ENCODE measurements at regions of chr17 and their contacts with region 1.

Region 1: GRCh38 chr17:42112552-42113176 is at the start of gene DHX58:
- H3K4me3 Mint-ChIP-seq: peak within 1 kb of the TSS; percentile 73
- H3K27ac Mint-ChIP-seq: peak within 1 kb of the TSS; percentile 93
- H3K4me1 Mint-ChIP-seq: peaks cover 64% of the 10 kb centered on the region
- H3K27me3 Mint-ChIP-seq: no peaks in the 10 kb centered on the region

Region 2: DNA sequence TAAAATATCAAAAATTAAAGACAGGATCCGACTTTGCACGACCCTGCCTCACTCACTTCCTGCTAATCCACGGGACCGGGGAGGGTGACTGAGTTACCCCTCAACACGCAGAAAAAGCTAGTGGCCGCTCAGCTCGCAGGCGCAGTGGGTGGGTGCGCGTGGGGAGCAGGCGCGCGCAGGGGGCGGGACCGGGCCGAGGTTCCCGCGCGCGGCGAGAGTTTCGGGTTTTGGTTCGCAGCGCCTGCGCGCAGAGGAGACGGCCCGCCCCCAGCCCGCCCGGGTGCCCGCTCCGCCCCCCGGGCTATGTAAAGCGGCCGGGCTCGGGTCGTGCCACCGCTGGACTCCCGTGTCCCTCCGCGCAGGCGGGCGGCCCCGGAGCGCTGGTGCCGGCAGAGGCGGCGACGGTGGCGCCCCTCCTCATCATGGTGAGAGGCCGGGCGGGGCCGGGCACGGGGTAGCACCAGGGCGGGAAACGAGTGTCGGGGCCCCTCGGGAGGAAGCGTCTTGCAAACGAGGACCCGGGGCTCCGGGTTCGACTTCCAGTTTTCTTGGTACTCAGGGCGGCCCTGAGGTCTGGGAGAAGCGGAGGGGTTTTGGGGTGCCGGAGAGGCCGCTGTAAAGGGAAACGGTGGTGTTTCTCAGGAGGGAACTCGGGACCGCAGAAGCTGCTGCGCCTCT is 146.1 kb before region 1 on chr17 and contains the start of gene CNP:
- intact Hi-C with region 1: loop called (anchors 1 kb)
- H3K4me3 Mint-ChIP-seq: peak within 1 kb of the TSS; percentile 76
- H3K27ac Mint-ChIP-seq: peak within 1 kb of the TSS; percentile 36
- H3K4me1 Mint-ChIP-seq: peaks cover 47% of the 10 kb centered on the region
- H3K27me3 Mint-ChIP-seq: peaks cover 4% of the 10 kb centered on the region

Region 3: DNA sequence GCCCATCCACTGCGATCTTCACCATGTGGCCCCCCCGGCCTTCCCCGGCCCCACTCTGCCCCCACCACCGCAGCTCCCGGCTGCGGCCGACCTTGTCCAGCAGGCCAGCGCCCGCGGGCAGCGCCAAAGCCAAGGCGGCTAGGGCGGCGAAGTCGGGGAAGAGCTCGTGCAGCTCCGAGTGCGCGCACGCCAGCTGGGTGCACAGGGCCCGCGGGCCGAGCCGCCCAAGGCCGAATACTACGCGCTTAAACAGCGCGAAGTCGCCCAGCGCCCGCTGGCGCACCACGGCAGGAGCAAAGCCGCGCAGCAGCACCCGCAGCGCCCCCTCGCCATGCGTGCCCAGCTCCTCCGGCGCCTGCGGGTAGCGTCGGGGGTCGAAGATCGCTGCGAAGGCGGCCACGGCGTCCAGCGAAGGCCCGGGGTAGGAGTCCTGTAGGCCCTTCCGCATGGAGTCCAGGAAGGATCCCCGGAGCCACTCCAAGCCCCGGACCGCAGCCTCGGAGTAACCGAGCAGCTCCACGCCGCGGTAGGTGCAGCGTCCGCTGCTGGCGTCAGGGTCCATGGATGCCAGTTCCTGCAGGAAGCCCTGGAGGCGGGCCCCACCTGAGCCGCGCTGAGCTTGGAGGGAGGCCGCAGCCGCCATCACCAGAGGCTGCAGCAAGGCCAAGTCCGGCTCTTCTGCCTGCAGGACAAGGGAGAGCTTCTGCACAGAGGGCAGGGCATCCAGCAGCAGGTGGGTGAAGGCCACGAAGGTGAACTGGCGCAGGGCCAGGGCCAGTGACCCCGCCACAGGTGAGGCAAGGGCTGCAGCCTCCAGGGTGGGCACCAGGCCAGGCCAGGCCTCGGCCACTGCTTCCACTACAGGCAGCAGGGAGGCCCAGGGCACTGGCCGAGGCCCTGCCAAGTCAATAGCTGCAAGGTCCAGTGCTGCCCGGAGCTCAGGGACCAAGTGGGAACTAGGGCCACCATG is 72.6 kb before region 1 on chr17:
- intact Hi-C with region 1: no loop called
- H3K4me3 Mint-ChIP-seq: peak overlapping the region; percentile 58
- H3K27ac Mint-ChIP-seq: no peak overlapping the region
- H3K4me1 Mint-ChIP-seq: no peaks in the 10 kb centered on the region
- H3K27me3 Mint-ChIP-seq: peaks cover 20% of the 10 kb centered on the region

Region 4: GRCh38 chr17:42067351-42068091 is 45.1 kb before region 1 on chr17:
- intact Hi-C with region 1: loop called (anchors 5 kb)
- H3K4me3 Mint-ChIP-seq: no peak overlapping the region
- H3K27ac Mint-ChIP-seq: no peak overlapping the region
- H3K4me1 Mint-ChIP-seq: peaks cover 28% of the 10 kb centered on the region
- H3K27me3 Mint-ChIP-seq: peaks cover 30% of the 10 kb centered on the region

Region 5: DNA sequence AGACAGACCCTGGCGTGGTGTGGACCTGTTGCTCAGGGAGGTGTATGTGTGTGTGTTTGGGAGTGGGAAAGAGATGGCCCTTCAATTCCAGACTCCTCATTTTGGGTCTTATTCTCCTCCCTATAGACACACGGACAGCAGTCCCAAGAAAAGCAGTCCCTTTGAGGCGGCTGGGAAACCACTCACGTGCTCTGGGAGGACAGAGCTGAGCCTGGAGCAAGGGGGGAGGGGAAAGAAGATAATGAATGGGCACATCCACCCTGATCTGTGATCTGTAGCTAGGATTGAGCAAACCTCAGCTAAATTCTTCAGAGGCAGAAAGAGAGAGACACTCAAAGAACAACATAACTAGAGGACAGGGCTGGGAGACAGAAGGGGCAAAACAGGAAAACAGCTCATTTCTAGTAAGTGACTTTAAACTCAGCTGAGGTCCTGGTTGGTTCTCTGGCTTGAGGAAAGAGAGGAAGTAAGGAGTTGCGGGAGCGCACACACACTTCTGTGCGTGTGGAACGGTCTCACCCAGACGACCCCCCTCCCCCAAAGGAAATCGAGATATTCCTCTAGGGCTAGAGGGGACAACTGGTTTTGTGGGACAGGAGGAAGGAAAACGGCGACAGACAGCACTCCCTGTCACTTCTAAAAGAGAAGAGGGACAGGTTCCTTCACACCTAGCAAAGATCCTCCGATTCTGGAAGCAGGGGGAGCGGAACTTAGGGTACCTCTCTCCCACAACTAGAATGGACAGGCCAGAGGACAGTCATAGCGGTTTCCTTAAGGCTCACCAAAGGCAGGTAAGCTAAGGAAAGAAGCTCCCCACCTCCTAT is 41.5 kb after region 1 on chr17:
- intact Hi-C with region 1: no loop called
- H3K4me3 Mint-ChIP-seq: peak overlapping the region; percentile 78
- H3K27ac Mint-ChIP-seq: peak overlapping the region; percentile 94
- H3K4me1 Mint-ChIP-seq: peaks cover 46% of the 10 kb centered on the region
- H3K27me3 Mint-ChIP-seq: no peaks in the 10 kb centered on the region

Region 6: DNA sequence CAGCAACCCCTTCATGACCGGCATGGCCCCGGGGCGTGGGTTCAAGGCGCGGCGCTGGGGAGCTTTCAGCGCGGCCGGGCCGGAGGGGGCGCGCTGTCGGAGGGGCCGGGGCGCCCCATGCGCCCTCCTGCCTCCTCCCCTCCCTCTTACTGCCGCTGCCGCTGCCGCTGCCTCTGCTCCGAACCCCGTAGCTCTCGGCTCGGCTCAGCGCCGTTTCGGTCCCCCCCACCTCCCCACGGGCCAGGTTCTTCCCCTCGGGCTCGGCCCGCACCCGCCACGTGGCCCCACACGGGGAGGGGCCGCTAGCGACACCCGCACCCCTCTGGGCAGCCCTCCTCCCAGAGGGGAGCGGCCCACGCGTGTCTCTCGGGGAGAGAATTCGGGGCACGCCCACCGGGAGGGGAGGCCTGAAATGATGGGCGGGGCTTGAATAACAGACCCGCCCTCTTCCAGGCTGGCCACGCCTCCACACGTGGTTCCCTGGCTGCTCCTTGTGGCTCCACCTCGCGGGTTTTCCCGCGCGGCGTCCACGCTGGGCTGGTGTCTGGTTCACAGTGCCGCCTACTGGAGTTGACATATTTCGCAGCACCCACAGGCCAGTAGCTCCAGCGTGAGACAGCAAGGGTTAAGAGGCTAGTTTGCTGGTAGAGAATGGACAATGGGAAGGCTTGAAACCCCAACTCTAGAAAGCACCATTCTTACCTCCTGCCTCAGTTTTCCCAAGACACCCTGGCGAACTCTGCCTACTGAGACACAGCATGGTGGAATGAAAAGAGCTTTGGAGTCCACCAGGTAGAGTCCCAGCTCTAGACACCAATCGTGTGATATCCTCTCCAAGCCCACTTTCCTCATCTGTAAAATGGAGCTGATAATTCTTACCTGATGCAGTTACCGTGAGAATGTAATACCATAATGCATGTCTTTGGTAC is 68.5 kb after region 1 on chr17 and contains the start of gene KCNH4:
- intact Hi-C with region 1: no loop called
- H3K4me3 Mint-ChIP-seq: peak within 1 kb of the TSS; percentile 78
- H3K27ac Mint-ChIP-seq: no peak within 1 kb of the TSS
- H3K4me1 Mint-ChIP-seq: peaks cover 89% of the 10 kb centered on the region
- H3K27me3 Mint-ChIP-seq: peaks cover 43% of the 10 kb centered on the region

Measured in dendritic cell treated with granulocyte-macrophage colony-stimulating factor and Interleukin-4, amounts not matched to agents 40 ng/mL and 50 ng/mL, for 4 days (primary cell).